ENCODE measurements at regions of chr7 and their contacts with region 1.

Region 1: DNA sequence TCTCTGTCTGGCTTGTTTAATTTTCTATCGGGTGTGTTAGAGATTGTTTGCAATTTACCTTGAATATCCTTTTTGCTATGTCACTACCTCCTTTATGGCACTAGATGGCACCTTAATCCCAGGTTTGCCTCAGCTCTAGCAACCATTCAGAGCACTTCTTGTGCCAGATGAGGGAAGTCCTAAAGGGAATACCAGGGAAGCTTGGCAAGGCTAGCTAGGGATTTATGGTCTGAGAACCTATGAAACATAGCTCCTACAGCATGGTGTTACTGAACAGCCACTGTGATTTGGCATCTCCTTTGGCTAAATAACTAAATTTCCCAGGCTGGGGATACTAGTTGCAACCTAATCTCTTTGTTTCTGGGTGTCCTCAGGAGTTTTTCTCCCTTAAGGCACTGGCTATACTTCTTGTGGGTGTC is 69.0 kb upstream of the VOPP1 start:
- DNase-seq: peak; percentile 89
- H3K4me3 ChIP-seq: no peak overlapping the region
- H3K27ac ChIP-seq: peak overlapping the region; percentile 73
- H3K4me1 ChIP-seq: peaks cover 10% of the 10 kb centered on the region
- H3K27me3 ChIP-seq: no peaks in the 10 kb centered on the region
- CTCF ChIP-seq: peak; percentile 81

Region 2: GRCh38 chr7:55271069-55271626 is 370.1 kb before region 1 on chr7:
- CTCF ChIA-PET with region 1: no interaction called
- POLR2A ChIA-PET with region 1: no interaction called
- intact Hi-C with region 1: no loop called
- DNase-seq: peak; percentile 17
- H3K4me3 ChIP-seq: no peak overlapping the region
- H3K27ac ChIP-seq: no peak overlapping the region
- H3K4me1 ChIP-seq: no peaks in the 10 kb centered on the region
- H3K27me3 ChIP-seq: no peaks in the 10 kb centered on the region
- CTCF ChIP-seq: peak; percentile 47

Region 3: GRCh38 chr7:55475855-55476803 is 165.2 kb before region 1 on chr7:
- CTCF ChIA-PET with region 1: no interaction called
- POLR2A ChIA-PET with region 1: interaction called, 17 read pairs
- intact Hi-C with region 1: no loop called
- DNase-seq: peak; percentile 56
- H3K4me3 ChIP-seq: no peak overlapping the region
- H3K27ac ChIP-seq: no peak overlapping the region
- H3K4me1 ChIP-seq: no peaks in the 10 kb centered on the region
- H3K27me3 ChIP-seq: no peaks in the 10 kb centered on the region
- CTCF ChIP-seq: no peak

Region 4: DNA sequence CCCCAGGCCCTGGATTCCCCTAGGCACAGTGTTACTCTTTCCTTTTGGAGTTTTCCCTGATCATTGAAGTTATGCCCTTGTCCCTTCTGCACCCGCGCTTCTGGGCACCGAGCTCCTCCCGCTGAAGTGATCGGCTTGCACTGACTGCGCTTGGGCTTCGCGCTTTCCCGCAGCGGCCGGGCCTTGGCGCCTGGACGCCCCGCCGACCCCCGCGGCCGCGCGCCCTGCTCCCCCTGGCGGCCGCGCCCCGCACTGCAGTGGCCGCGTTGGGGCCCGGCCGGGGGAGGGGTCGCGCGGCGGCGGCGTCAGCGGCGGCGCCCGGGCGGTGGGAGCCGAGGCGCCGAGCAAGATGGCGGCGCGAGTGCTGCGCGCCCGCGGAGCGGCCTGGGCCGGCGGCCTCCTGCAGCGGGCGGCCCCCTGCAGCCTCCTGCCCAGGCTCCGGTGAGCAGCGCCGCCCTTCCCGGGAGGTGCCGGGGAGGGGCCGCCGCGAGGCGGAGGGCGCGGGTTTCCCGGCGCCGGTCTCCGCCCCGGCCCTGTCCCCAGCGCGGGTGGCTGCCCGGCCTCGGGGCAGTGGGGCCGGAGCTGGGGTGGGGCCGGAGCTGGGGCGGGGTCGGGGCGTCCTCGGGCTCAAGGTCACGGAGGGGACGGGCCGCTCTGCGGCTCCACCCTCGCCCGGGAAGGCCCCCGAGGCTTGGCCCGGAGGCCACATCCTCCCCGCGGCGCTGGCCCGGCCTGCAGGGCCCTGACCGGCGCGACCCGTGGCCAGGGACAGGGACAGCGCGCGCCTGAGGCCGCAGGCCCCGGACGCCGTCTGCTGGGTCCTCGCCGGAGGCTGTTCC is 323.2 kb after region 1 on chr7 and contains the start of gene NIPSNAP2:
- CTCF ChIA-PET with region 1: interaction called, 8 read pairs
- POLR2A ChIA-PET with region 1: no interaction called
- intact Hi-C with region 1: loop called (anchors 2 kb)
- DNase-seq: peak; percentile 81
- H3K4me3 ChIP-seq: peak within 1 kb of the TSS; percentile 96
- H3K27ac ChIP-seq: peak within 1 kb of the TSS; percentile 95
- H3K4me1 ChIP-seq: peaks cover 5% of the 10 kb centered on the region
- H3K27me3 ChIP-seq: no peaks in the 10 kb centered on the region
- CTCF ChIP-seq: no peak; the same call in 1 of the 2 replicates
- total RNA-seq, gene NIPSNAP2: 91.8 and 93.7 TPM in 2 replicates

Region 5: DNA sequence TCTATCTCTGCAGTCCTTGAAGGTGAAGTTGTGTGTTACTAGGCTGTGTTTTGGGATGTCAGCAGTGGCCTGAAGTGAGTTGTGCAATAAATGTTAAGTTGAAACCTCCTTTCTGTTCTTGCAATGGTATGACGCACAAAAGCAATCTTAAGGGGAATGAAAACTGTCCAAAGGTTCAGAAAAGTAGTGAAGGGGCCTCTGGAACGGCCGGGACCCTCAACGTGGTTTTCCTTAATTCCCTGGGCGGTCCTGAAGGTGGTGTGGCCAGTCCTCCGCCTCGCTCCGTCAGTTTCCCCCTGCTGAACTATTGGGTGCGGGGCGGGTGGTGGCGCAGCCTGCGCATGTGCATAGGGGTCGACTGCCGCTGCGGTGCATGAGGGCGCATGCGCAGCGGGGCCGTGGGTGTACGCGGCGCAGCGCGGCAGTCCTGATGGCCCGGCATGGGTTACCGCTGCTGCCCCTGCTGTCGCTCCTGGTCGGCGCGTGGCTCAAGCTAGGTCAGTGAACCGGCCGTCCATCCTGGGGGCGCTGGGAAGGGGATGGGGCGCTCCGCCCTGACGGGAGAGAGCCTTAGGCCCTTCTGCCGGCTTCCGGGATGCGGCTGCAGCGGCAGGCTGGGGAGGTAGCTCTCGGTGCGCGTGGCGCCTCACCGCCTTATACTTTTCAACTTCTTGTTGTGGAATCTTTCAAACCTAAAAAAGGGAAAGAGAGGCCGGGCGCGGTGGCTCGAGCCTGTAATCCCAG is 422.8 kb after region 1 on chr7 and contains the start of gene SUMF2:
- CTCF ChIA-PET with region 1: interaction called, 10 read pairs
- POLR2A ChIA-PET with region 1: no interaction called
- intact Hi-C with region 1: no loop called
- DNase-seq: peak; percentile 92
- H3K4me3 ChIP-seq: peak within 1 kb of the TSS; percentile 78
- H3K27ac ChIP-seq: peak within 1 kb of the TSS; percentile 86
- H3K4me1 ChIP-seq: peaks cover 20% of the 10 kb centered on the region
- H3K27me3 ChIP-seq: no peaks in the 10 kb centered on the region
- CTCF ChIP-seq: no peak
- total RNA-seq, gene SUMF2: 157 and 159 TPM in 2 replicates

Region 6: GRCh38 chr7:56074371-56074791 is 433.1 kb after region 1 on chr7:
- CTCF ChIA-PET with region 1: interaction called, 4 read pairs
- POLR2A ChIA-PET with region 1: no interaction called
- intact Hi-C with region 1: loop called (anchors 2 kb)
- DNase-seq: peak; percentile 90
- H3K4me3 ChIP-seq: no peak overlapping the region
- H3K27ac ChIP-seq: no peak overlapping the region
- H3K4me1 ChIP-seq: no peaks in the 10 kb centered on the region
- H3K27me3 ChIP-seq: no peaks in the 10 kb centered on the region
- CTCF ChIP-seq: peak; percentile 96